GM12878 (cell line): ENCODE measurements at regions of chr14 and their contacts with region 1.

Region 1: GRCh38 chr14:60184146-60184904 is 19.1 kb upstream of the DHRS7 start:
- DNase-seq: no peak
- ATAC-seq: peak; percentile 76
- H3K4me3 ChIP-seq: peak overlapping the region; percentile 43; the same call in 1 of the 2 replicates
- H3K27ac ChIP-seq: peak overlapping the region; percentile 72
- H3K4me1 ChIP-seq: peaks cover 11% of the 10 kb centered on the region
- H3K27me3 ChIP-seq: no peaks in the 10 kb centered on the region
- CTCF ChIP-seq: peak; percentile 45 to 78 (median 61)
- EP300 ChIP-seq: no peak
- POLR2A ChIP-seq: no peak
- RAD21 ChIP-seq: peak; percentile 95

Region 2: DNA sequence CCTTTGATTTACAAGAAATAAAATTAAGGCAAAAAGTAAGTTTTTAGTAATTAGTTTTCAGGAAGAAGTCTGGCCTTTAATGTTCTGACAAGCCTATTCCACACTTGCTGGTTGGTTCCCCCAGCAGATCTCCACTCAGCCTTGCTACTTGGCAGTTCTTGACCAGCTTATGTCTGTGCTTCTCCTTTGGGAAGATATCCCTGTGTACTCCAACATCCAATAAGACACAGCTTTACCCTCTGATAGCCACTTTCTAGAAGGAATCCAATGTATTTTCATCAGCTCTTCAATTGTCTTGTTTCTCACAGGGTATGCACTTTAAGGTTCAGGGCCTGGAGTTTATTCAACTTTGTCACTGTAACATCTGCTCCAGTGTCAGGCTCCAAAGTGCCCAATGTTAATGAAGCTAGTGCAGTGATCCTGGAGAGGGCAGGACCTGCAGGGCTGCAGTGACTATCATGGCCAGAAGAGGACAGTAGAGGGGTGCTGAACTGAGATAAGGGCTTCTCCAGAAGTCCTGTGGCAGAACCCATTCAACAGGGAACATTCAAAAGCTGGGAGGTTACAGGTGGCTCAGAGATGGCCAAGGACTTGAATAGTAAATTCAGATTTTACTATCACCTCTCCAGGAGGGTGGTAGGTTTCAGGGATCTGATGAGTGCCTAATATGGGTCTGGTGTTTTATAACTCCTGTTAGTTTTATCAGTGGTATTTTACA is 677.1 kb before region 1 on chr14:
- CTCF ChIA-PET with region 1: interaction called, 8 read pairs
- POLR2A ChIA-PET with region 1: no interaction called
- RAD21 ChIA-PET with region 1: interaction called, 11 read pairs
- SMC1A ChIA-PET with region 1: interaction called, 5 read pairs
- in situ Hi-C with region 1: no loop called
- intact Hi-C with region 1: no loop called
- DNase-seq: no peak
- ATAC-seq: peak; percentile 94
- H3K4me3 ChIP-seq: no peak overlapping the region
- H3K27ac ChIP-seq: no peak overlapping the region
- H3K4me1 ChIP-seq: no peaks in the 10 kb centered on the region
- H3K27me3 ChIP-seq: no peaks in the 10 kb centered on the region
- CTCF ChIP-seq: peak; percentile 86 to 95 (median 90)
- EP300 ChIP-seq: no peak
- POLR2A ChIP-seq: no peak
- RAD21 ChIP-seq: peak; percentile 68

Region 3: GRCh38 chr14:59918824-59919569 is 265.3 kb before region 1 on chr14:
- CTCF ChIA-PET with region 1: interaction called, 10 read pairs
- POLR2A ChIA-PET with region 1: no interaction called
- RAD21 ChIA-PET with region 1: interaction called, 3 read pairs
- SMC1A ChIA-PET with region 1: interaction called, 4 read pairs
- in situ Hi-C with region 1: no loop called
- intact Hi-C with region 1: no loop called
- DNase-seq: no peak
- ATAC-seq: peak; percentile 83
- H3K4me3 ChIP-seq: peak overlapping the region; percentile 45; the same call in 1 of the 2 replicates
- H3K27ac ChIP-seq: no peak overlapping the region
- H3K4me1 ChIP-seq: peaks cover 3% of the 10 kb centered on the region; the same call in 1 of the 2 replicates
- H3K27me3 ChIP-seq: peaks cover 0 to 5% of the 10 kb centered on the region in 2 experiments; a peak in 2 of 4 replicates
- CTCF ChIP-seq: peak; percentile 21 to 45 (median 38); a peak in 5 of 6 replicates
- EP300 ChIP-seq: no peak
- POLR2A ChIP-seq: no peak
- RAD21 ChIP-seq: peak; percentile 26; the same call in 1 of the 2 replicates

Region 4: GRCh38 chr14:60064491-60065072 is 119.7 kb before region 1 on chr14:
- CTCF ChIA-PET with region 1: interaction called, 138 read pairs
- POLR2A ChIA-PET with region 1: interaction called, 5 read pairs
- RAD21 ChIA-PET with region 1: interaction called, 100 read pairs
- SMC1A ChIA-PET with region 1: interaction called, 147 read pairs
- in situ Hi-C with region 1: loop called (anchors 5 kb)
- intact Hi-C with region 1: loop called (anchors 1 kb)
- DNase-seq: peak; percentile 15
- ATAC-seq: peak; percentile 80
- H3K4me3 ChIP-seq: no peak overlapping the region
- H3K27ac ChIP-seq: no peak overlapping the region
- H3K4me1 ChIP-seq: no peaks in the 10 kb centered on the region
- H3K27me3 ChIP-seq: no peaks in the 10 kb centered on the region
- CTCF ChIP-seq: peak; percentile 41 to 71 (median 52); a peak in 5 of 6 replicates
- EP300 ChIP-seq: no peak
- POLR2A ChIP-seq: no peak
- RAD21 ChIP-seq: peak; percentile 70

Region 5: GRCh38 chr14:60151715-60152114 is 32.6 kb before region 1 on chr14:
- CTCF ChIA-PET with region 1: interaction called, 7 read pairs
- POLR2A ChIA-PET with region 1: no interaction called
- RAD21 ChIA-PET with region 1: interaction called, 3 read pairs
- SMC1A ChIA-PET with region 1: interaction called, 10 read pairs
- in situ Hi-C with region 1: no loop called
- intact Hi-C with region 1: no loop called
- DNase-seq: no peak
- ATAC-seq: peak; percentile 83
- H3K4me3 ChIP-seq: no peak overlapping the region
- H3K27ac ChIP-seq: no peak overlapping the region
- H3K4me1 ChIP-seq: peaks cover 5% of the 10 kb centered on the region; the same call in 1 of the 2 replicates
- H3K27me3 ChIP-seq: no peaks in the 10 kb centered on the region
- CTCF ChIP-seq: no peak
- EP300 ChIP-seq: no peak
- POLR2A ChIP-seq: no peak
- RAD21 ChIP-seq: no peak

Region 6: GRCh38 chr14:60204104-60204842 is 19.9 kb after region 1 on chr14:
- CTCF ChIA-PET with region 1: interaction called, 61 read pairs
- POLR2A ChIA-PET with region 1: interaction called, 5 read pairs
- RAD21 ChIA-PET with region 1: interaction called, 153 read pairs
- SMC1A ChIA-PET with region 1: interaction called, 199 read pairs
- in situ Hi-C with region 1: no loop called
- intact Hi-C with region 1: no loop called
- DNase-seq: peak; percentile 90
- ATAC-seq: peak; percentile 78
- H3K4me3 ChIP-seq: peak overlapping the region; percentile 43; the same call in 1 of the 2 replicates
- H3K27ac ChIP-seq: peak overlapping the region; percentile 91
- H3K4me1 ChIP-seq: peaks cover 44% of the 10 kb centered on the region
- H3K27me3 ChIP-seq: no peaks in the 10 kb centered on the region
- CTCF ChIP-seq: no peak
- EP300 ChIP-seq: peak; percentile 77 to 88; a peak in 3 of 4 replicates
- POLR2A ChIP-seq: no peak
- RAD21 ChIP-seq: no peak

Region 7: DNA sequence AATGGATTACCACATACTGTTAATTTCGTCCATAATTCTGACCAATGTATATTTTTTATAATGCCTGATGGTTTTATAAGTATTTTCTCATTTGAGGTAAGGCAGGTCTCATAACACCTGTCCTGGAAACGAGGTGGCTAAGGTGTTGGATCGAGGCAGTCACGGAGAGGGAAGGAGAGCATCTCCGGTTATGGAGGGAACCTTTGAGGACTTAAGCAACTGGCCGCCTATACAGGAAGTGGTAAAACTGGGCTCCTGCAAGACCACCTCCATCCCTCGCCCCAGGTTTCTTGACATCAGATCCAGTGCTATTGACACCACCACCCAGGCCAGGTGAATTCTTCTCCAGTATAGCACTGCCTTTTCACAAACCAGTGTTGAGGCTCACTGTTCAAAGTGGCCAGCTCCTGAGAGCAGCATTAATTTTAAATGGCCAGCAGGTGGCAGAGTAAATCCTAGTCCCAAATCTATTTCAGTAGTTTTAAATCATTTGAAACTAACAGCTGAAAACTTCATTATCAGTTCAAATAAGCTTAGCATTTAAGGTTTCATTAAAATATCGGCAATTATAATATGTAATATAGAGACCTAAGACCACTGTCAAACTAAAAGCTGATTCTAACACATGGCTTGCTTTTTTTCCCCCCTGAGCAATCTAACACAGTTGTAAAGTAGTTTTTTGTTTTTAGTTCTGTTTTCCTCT is 165.5 kb after region 1 on chr14:
- CTCF ChIA-PET with region 1: interaction called, 84 read pairs
- POLR2A ChIA-PET with region 1: no interaction called
- RAD21 ChIA-PET with region 1: interaction called, 11 read pairs
- SMC1A ChIA-PET with region 1: interaction called, 10 read pairs
- in situ Hi-C with region 1: no loop called
- intact Hi-C with region 1: no loop called
- DNase-seq: no peak
- ATAC-seq: peak; percentile 81
- H3K4me3 ChIP-seq: no peak overlapping the region
- H3K27ac ChIP-seq: no peak overlapping the region
- H3K4me1 ChIP-seq: no peaks in the 10 kb centered on the region
- H3K27me3 ChIP-seq: no peaks in the 10 kb centered on the region
- CTCF ChIP-seq: peak; percentile 41 to 70 (median 65); a peak in 5 of 6 replicates
- EP300 ChIP-seq: no peak
- POLR2A ChIP-seq: no peak
- RAD21 ChIP-seq: peak; percentile 66

Region 8: DNA sequence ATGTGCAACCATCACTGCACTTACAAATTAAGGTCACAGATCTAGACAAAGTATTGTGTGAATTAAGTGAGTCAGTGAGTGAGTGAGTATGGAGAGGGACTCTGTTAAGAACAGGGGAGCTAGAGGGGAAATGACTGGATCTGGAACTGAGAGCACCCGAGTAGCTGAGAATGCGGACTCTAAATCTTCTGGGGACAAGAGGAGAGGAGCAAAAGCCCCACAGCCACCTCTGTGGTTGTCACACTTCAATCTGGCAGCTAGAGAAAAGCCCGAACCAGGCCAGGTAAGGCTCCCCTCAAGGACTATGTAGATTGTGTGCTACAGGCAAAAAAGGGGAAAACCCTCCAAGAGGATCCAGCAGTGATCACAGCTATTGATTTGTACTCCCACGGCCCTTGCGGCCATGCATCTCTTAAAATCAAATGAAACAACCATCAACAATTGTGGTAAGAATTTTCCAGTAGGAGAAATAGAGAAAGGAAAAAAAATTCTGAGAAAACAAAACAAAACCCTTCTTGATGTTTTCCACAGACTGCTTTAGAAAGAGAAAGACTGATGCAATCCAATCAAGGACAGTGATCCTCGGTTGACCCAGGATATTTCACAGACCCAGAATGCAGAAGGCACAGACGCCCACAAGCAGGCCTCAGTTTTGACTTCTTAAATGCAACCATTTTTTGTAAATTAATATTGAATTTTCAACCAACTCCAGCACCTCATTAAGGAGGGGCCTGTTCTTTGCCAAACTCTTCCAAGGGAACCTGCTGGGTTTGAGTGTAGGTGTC is 906.3 kb after region 1 on chr14:
- CTCF ChIA-PET with region 1: no interaction called
- POLR2A ChIA-PET with region 1: no interaction called
- RAD21 ChIA-PET with region 1: no interaction called
- SMC1A ChIA-PET with region 1: no interaction called
- in situ Hi-C with region 1: no loop called
- intact Hi-C with region 1: no loop called
- DNase-seq: no peak
- ATAC-seq: peak; percentile 82
- H3K4me3 ChIP-seq: no peak overlapping the region
- H3K27ac ChIP-seq: no peak overlapping the region
- H3K4me1 ChIP-seq: peaks cover 13% of the 10 kb centered on the region
- H3K27me3 ChIP-seq: no peaks in the 10 kb centered on the region
- CTCF ChIP-seq: no peak
- EP300 ChIP-seq: no peak
- POLR2A ChIP-seq: no peak
- RAD21 ChIP-seq: no peak